Testis (tissue), 5 donors: ENCODE measurements at regions of chr17 and their contacts with region 1.

Region 1: GRCh38 chr17:46193626-46194392 is 580 bp upstream of the KANSL1 start:
- DNase-seq: peak; percentile 94
- H3K4me3 ChIP-seq: peak overlapping the region; percentile 89 to 96
- H3K27ac ChIP-seq: peak overlapping the region; percentile 99
- H3K4me1 ChIP-seq: peaks cover 13% of the 10 kb centered on the region
- H3K27me3 ChIP-seq: no peaks in the 10 kb centered on the region
- CTCF ChIP-seq: peak in 2 of 3 experiments; percentile 10 to 61
- POLR2A ChIP-seq: peak; percentile 13

Region 2: DNA sequence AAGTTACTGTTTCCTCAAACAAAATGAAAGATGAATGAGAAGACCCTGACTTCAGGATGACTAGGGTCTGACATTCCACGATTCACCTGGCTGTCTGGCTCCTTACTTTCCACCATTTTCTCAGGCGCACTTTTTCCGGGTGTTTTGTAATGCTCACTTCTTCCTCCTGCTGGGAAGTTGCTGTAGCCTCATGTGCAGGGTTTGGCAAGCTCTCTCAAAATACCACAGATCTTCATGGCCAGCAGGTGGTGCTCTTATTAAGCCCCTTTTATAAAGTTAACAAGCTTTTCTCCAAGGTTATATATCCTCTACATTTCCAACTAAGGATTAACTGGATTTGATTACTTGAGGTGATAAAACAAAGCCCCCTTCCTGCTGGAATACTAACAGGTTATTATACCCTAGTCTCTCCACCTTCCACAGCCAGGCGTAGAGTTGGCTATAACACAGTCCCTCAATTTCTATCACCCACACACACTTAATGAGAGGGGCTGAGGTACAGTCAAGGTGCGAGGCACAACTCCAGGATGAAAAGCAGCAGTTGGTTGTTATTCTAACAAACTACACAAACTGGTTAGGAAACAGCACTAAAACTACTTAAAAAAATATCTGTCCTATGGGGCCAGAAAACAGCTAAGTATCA is 149.4 kb before region 1 on chr17:
- intact Hi-C with region 1: loop called (anchors 10 kb)
- DNase-seq: peak; percentile 90
- H3K4me3 ChIP-seq: no peak overlapping the region
- H3K27ac ChIP-seq: peak overlapping the region in 1 of 2 donors; percentile 51
- H3K4me1 ChIP-seq: peaks cover 12% of the 10 kb centered on the region
- H3K27me3 ChIP-seq: no peaks in the 10 kb centered on the region
- CTCF ChIP-seq: peak; percentile 81 to 92 (median 89)
- POLR2A ChIP-seq: no peak